ENCODE measurements at regions of chr10 and their contacts with region 1.

Region 1: DNA sequence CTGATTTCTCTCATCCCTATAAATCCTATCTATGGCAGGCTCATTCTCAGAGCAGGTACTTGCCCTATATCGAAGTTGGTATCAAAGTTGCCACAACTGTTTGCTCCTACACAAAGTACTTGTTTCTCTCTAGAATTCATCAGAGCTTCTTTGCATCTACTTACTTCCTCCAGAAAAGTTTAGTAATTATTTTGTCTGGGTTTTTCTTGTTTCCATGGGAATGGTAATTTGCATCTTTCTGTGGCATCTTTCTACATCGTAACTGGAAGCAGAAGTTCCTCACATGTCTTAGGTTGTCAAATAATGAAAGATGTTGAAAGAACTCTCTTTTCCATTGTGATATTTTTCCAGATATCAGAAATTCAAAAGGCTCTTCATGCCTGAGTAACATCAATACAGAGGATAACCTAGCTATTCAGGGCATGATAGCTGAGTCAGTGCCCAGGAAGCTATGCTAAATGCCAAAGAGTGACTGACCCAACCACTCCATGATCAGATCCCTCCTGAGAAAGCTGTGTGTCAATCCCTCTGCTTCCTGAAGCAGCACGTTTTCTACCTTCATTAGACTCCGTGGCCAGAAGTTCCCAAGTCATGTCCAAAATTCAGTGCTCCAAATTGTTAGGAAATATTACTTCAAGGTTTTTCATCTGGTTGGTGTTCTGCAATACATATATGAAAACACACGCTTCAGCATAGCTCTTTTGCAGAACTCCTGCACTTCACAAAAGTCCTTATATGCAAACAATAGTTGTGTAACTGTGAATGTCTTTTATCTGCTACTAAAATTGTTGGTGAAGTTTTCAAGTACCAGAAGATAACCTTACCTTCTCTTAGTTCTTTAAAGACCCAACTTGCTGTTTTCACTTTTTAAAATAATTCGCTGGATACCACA is 216.5 kb downstream of the VTI1A start:
- DNase-seq: peak; percentile 78
- H3K4me3 ChIP-seq: no peak overlapping the region
- H3K27ac ChIP-seq: peak overlapping the region; percentile 52
- H3K4me1 ChIP-seq: peaks cover 15% of the 10 kb centered on the region
- H3K27me3 ChIP-seq: no peaks in the 10 kb centered on the region
- CTCF ChIP-seq: no peak

Region 2: GRCh38 chr10:112565434-112566053 is 97.9 kb before region 1 on chr10:
- CTCF ChIA-PET with region 1: no interaction called
- dilution Hi-C with region 1: no loop called
- in situ Hi-C with region 1: no loop called
- intact Hi-C with region 1: loop called (anchors 10 kb)
- DNase-seq: peak; percentile 53
- H3K4me3 ChIP-seq: no peak overlapping the region
- H3K27ac ChIP-seq: no peak overlapping the region
- H3K4me1 ChIP-seq: no peaks in the 10 kb centered on the region
- H3K27me3 ChIP-seq: no peaks in the 10 kb centered on the region
- CTCF ChIP-seq: peak; percentile 77 to 82

Region 3: GRCh38 chr10:112585126-112585525 is 78.4 kb before region 1 on chr10:
- CTCF ChIA-PET with region 1: no interaction called
- dilution Hi-C with region 1: no loop called
- in situ Hi-C with region 1: no loop called
- intact Hi-C with region 1: loop called (anchors 2 kb)
- DNase-seq: peak; percentile 75
- H3K4me3 ChIP-seq: no peak overlapping the region
- H3K27ac ChIP-seq: peak overlapping the region; percentile 47
- H3K4me1 ChIP-seq: peaks cover 12% of the 10 kb centered on the region
- H3K27me3 ChIP-seq: no peaks in the 10 kb centered on the region
- CTCF ChIP-seq: no peak

Region 4: DNA sequence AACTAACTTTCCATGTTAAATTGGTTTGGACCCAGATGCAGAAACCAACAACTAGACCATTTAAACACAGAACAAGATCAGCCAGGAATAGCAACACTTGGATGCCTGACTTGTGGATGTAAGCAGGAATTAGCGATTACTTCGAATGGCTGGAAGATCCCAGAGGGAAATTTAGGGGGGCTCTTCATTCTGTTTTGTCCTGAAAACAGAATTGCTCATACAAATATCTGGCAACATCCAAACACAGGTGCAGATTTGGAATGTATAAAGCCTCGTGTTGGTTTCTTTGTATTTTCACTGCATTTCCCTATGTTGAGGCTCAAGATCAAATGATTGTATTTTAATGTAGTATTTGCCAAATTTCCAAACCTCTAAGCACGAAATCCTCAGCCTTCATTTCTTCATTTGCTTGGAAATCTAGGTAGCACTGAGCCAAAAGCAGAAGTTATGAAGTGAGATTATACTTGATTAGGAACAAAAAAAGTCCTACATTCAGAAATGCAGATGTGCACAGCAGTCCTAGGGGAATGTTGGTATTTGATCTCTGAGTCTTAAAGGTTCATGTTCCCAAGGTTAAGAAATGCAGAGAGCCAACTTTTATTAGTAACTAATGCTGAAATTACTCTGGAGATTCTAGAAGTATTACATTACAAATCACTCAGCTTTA is 37.9 kb after region 1 on chr10:
- CTCF ChIA-PET with region 1: no interaction called
- dilution Hi-C with region 1: no loop called
- in situ Hi-C with region 1: no loop called
- intact Hi-C with region 1: no loop called
- DNase-seq: no peak
- H3K4me3 ChIP-seq: no peak overlapping the region
- H3K27ac ChIP-seq: no peak overlapping the region
- H3K4me1 ChIP-seq: no peaks in the 10 kb centered on the region
- H3K27me3 ChIP-seq: no peaks in the 10 kb centered on the region
- CTCF ChIP-seq: no peak